B cell (primary cell): ENCODE measurements at regions of chr1 and their contacts with region 1.

Region 1: DNA sequence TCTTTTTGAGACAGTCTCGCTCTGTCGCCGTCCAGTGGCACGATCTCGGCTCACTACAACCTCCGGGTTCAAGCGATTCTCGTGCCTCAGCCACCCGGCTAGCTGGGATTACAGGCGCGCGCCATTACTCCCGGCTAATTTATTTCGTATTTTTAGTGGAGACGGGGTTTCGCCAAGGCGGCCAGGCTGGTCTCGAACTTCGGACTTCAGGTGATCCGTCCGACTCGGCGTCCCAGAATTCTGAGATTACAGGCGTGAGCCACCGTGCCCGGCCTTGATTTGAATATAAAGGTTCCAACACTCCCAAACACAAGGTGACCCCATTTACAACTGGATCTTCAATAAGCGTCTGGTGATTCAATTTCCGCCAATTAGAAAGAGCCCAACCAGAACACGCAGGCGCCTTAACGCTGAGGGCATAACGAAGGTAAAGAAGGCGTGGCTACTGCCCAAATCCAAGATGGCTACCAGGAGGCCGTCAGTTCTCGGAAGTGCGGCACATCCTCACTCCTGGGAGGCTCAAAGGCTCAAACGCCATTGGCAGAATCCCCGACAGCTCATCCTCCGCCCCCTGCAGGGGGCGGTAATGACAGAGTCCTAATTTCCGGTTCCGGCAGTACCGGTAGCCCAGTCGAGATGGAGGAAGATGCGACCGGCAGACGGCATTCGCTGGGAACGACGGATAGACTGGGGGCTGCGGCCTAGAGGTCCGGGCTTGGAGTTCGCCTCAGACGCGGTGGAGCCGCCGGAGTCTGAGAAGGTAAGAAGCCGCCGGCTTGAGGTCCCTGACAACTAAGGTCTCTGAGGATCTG is at the start of gene SLC25A44:
- DNase-seq: peak; percentile 99
- ATAC-seq: peak; percentile 99
- H3K4me3 ChIP-seq: peak within 1 kb of the TSS; percentile 61 to 94 (median 84)
- H3K4me3 Mint-ChIP-seq: peak within 1 kb of the TSS; percentile 92
- H3K27ac ChIP-seq: peak within 1 kb of the TSS; percentile 80 to 86
- H3K27ac Mint-ChIP-seq: peak within 1 kb of the TSS; percentile 78
- H3K4me1 ChIP-seq: peaks cover 10 to 14% of the 10 kb centered on the region in 2 donors
- H3K4me1 Mint-ChIP-seq: peaks cover 36% of the 10 kb centered on the region
- H3K27me3 ChIP-seq: no peaks in the 10 kb centered on the region
- H3K27me3 Mint-ChIP-seq: no peaks in the 10 kb centered on the region
- CTCF ChIP-seq: peak; percentile 67
- total RNA-seq, gene SLC25A44: 26.6 and 27.2 TPM in 2 replicates

Region 2: GRCh38 chr1:156082309-156083091 is 111.2 kb before region 1 on chr1 and contains the start of gene MEX3A:
- CTCF ChIA-PET with region 1: no interaction called
- POLR2A ChIA-PET with region 1: no interaction called
- intact Hi-C with region 1: loop called (anchors 2 kb)
- DNase-seq: peak; percentile 74
- ATAC-seq: peak; percentile 85
- H3K4me3 ChIP-seq: peak within 1 kb of the TSS; percentile 44 to 87 (median 81)
- H3K4me3 Mint-ChIP-seq: peak within 1 kb of the TSS; percentile 91
- H3K27ac ChIP-seq: peak within 1 kb of the TSS in 1 of 2 donors; percentile 26
- H3K27ac Mint-ChIP-seq: peak within 1 kb of the TSS; percentile 63
- H3K4me1 ChIP-seq: peaks cover 11 to 18% of the 10 kb centered on the region in 2 donors
- H3K4me1 Mint-ChIP-seq: peaks cover 22% of the 10 kb centered on the region
- H3K27me3 ChIP-seq: peaks cover 0 to 49% (median 21%) of the 10 kb centered on the region in 4 experiments
- H3K27me3 Mint-ChIP-seq: peaks cover 12% of the 10 kb centered on the region
- CTCF ChIP-seq: no peak
- total RNA-seq, gene MEX3A: 0.73 and 1.1 TPM in 2 replicates

Region 3: GRCh38 chr1:156104065-156104810 is 89.5 kb before region 1 on chr1:
- CTCF ChIA-PET with region 1: no interaction called
- POLR2A ChIA-PET with region 1: no interaction called
- intact Hi-C with region 1: loop called (anchors 1 kb)
- DNase-seq: peak; percentile 73
- ATAC-seq: no peak
- H3K4me3 ChIP-seq: no peak overlapping the region
- H3K4me3 Mint-ChIP-seq: peak overlapping the region; percentile 86
- H3K27ac ChIP-seq: peak overlapping the region in 1 of 2 donors; percentile 99
- H3K27ac Mint-ChIP-seq: peak overlapping the region; percentile 92
- H3K4me1 ChIP-seq: peaks cover 35 to 43% of the 10 kb centered on the region in 2 donors
- H3K4me1 Mint-ChIP-seq: peaks cover 55% of the 10 kb centered on the region
- H3K27me3 ChIP-seq: peaks cover 0 to 5% (median 2%) of the 10 kb centered on the region in 4 experiments
- H3K27me3 Mint-ChIP-seq: no peaks in the 10 kb centered on the region
- CTCF ChIP-seq: no peak

Region 4: GRCh38 chr1:156146020-156146768 is 47.5 kb before region 1 on chr1:
- CTCF ChIA-PET with region 1: interaction called, 3 read pairs
- POLR2A ChIA-PET with region 1: interaction called, 4 read pairs
- intact Hi-C with region 1: loop called (anchors 1 kb)
- DNase-seq: peak; percentile 83
- ATAC-seq: peak; percentile 66
- H3K4me3 ChIP-seq: peak overlapping the region in 1 of 5 experiments; percentile 15
- H3K4me3 Mint-ChIP-seq: peak overlapping the region; percentile 62
- H3K27ac ChIP-seq: no peak overlapping the region
- H3K27ac Mint-ChIP-seq: peak overlapping the region; percentile 42
- H3K4me1 ChIP-seq: peaks cover 50 to 54% of the 10 kb centered on the region in 2 donors
- H3K4me1 Mint-ChIP-seq: peaks cover 48% of the 10 kb centered on the region
- H3K27me3 ChIP-seq: peaks cover 0 to 10% (median 5%) of the 10 kb centered on the region in 4 experiments
- H3K27me3 Mint-ChIP-seq: peaks cover 8% of the 10 kb centered on the region
- CTCF ChIP-seq: peak; percentile 75

Region 5: DNA sequence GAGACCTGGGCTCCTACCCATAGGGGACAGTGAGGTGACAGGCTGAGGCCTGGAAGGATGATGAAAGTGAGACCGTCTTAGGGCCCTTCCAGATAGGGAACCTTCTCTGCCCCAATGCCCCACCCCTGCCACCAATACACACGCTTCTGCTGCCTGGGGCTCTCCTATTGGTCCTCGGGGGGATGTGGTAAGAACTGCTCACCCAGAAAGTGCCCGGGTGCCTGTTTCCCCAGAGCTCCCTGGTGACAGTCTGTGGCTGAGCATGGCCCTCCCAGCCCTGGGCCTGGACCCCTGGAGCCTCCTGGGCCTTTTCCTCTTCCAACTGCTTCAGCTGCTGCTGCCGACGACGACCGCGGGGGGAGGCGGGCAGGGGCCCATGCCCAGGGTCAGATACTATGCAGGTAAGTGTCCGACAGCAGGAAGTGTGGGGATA is 39.4 kb before region 1 on chr1:
- CTCF ChIA-PET with region 1: interaction called, 7 read pairs
- POLR2A ChIA-PET with region 1: interaction called, 10 read pairs
- intact Hi-C with region 1: loop called (anchors 1 kb)
- DNase-seq: peak; percentile 92
- ATAC-seq: peak; percentile 96
- H3K4me3 ChIP-seq: peak overlapping the region; percentile 38 to 71 (median 54)
- H3K4me3 Mint-ChIP-seq: peak overlapping the region; percentile 80
- H3K27ac ChIP-seq: peak overlapping the region; percentile 74 to 90
- H3K27ac Mint-ChIP-seq: peak overlapping the region; percentile 91
- H3K4me1 ChIP-seq: peaks cover 89 to 100% of the 10 kb centered on the region in 2 donors
- H3K4me1 Mint-ChIP-seq: peaks cover 94% of the 10 kb centered on the region
- H3K27me3 ChIP-seq: peaks cover 0 to 13% (median 4%) of the 10 kb centered on the region in 4 experiments
- H3K27me3 Mint-ChIP-seq: peaks cover 26% of the 10 kb centered on the region
- CTCF ChIP-seq: no peak

Region 6: DNA sequence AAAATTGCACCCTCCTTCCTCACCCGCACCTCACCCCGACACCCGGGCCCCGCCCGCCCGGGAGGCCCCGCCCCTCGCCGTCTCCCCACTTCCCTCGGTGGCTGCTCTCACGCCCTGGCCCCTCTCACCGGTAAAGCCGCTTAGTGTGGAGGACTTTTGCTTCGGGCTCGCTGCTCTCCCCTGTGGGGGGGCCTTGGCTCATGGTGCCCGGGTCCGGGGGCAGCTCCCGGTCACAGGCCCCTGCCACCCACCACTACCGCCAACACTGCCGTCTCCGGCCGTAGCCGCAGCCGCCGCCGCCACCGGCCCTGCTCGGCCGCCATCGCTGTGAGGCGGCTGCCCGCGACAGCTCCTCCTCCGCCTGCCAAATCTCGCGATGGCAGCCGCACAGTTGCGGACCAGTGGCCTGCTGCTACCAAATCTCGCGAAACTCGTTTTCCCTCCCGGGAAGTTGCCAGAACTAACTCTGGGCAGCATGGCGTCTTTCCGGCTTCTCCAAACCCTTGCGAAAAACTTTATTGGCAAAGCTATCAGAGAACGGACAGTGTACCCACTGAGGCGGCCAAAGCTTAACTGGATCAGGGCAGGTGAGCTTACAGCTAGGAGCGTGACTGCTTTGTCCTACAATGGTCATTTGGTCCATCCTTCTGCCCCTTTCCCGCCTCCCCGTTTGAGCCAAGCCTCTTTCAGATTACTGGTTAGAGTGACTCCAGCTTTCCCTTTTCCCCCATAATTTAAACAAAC is 89.0 kb after region 1 on chr1 and contains the start of gene SMG5:
- CTCF ChIA-PET with region 1: no interaction called
- POLR2A ChIA-PET with region 1: interaction called, 4 read pairs
- intact Hi-C with region 1: loop called (anchors 1 kb)
- DNase-seq: peak; percentile 98
- ATAC-seq: peak; percentile 93
- H3K4me3 ChIP-seq: peak within 1 kb of the TSS; percentile 74 to 99 (median 86)
- H3K4me3 Mint-ChIP-seq: peak within 1 kb of the TSS; percentile 98
- H3K27ac ChIP-seq: peak within 1 kb of the TSS; percentile 79 to 89
- H3K27ac Mint-ChIP-seq: peak within 1 kb of the TSS; percentile 98
- H3K4me1 ChIP-seq: peaks cover 20 to 28% of the 10 kb centered on the region in 2 donors
- H3K4me1 Mint-ChIP-seq: peaks cover 39% of the 10 kb centered on the region
- H3K27me3 ChIP-seq: no peaks in the 10 kb centered on the region
- H3K27me3 Mint-ChIP-seq: no peaks in the 10 kb centered on the region
- CTCF ChIP-seq: no peak
- total RNA-seq, gene SMG5: 74.0 and 77.0 TPM in 2 replicates

Region 7: GRCh38 chr1:156338180-156338973 is 144.7 kb after region 1 on chr1 and contains the starts of genes CCT3 and TSACC:
- CTCF ChIA-PET with region 1: no interaction called
- POLR2A ChIA-PET with region 1: no interaction called
- intact Hi-C with region 1: loop called (anchors 1 kb)
- DNase-seq: peak; percentile 100
- ATAC-seq: peak; percentile 94
- H3K4me3 ChIP-seq: peak within 1 kb of the TSS; percentile 82 to 98 (median 87)
- H3K4me3 Mint-ChIP-seq: peak within 1 kb of the TSS; percentile 97
- H3K27ac ChIP-seq: peak within 1 kb of the TSS; percentile 70 to 74
- H3K27ac Mint-ChIP-seq: peak within 1 kb of the TSS; percentile 96
- H3K4me1 ChIP-seq: peaks cover 13 to 19% of the 10 kb centered on the region in 2 donors
- H3K4me1 Mint-ChIP-seq: peaks cover 35% of the 10 kb centered on the region
- H3K27me3 ChIP-seq: no peaks in the 10 kb centered on the region
- H3K27me3 Mint-ChIP-seq: no peaks in the 10 kb centered on the region
- CTCF ChIP-seq: no peak
- total RNA-seq, gene CCT3: 106 and 109 TPM in 2 replicates
- total RNA-seq, gene TSACC: 0.69 TPM in 1 of 2 replicates, not detected in the other